ENCODE measurements at regions of chr16 and their contacts with region 1.

Region 1: DNA sequence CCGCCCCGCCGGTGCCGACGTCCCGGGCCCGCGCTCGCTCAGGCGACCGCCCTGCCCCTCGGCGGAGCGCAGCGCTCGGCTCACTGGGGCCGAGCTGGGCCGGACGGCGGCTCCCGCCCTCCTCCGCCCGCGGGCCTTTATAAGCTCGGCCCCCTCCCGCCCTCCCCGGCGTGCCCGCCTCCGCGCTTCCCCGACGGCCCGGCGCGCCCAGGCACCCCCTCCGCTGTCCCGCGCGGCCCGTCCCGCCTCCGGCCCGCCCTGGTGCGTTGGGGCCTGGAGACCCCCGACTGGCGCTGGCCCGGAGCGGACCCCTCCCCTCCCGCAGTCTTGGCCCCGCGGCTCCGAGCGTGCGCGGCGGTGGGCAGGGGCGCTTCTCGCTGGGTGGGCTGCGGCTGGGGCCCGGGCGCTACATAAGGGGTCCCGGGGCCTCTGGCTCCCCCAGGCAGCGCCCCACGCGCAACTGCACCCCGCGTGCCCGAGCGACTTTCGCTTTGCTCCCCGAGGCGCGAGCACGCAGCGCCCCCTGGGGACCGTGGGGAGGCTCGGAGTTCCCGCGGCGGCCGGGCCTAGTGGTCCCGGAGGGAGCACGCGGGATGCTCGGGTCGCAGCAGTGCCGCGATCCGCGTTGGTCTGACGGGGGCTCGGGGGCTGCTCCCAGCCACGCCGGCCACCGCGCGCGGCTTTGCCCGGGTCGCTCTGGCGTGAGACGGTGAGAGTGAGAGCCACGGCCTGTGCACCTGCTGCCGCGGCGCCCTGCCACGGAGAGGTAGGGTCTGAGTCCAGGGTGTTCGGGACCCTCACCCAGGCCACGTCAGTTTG is at the start of gene PIEZO1:
- DNase-seq: peak; percentile 73 to 91 (median 85)
- ATAC-seq: peak; percentile 72 to 73
- H3K4me3 Mint-ChIP-seq: peak within 1 kb of the TSS; percentile 61 to 89 (median 75)
- H3K27ac Mint-ChIP-seq: peak within 1 kb of the TSS in 6 of 10 donors; percentile 29 to 84 (median 72)
- H3K4me1 Mint-ChIP-seq: peaks cover 20 to 52% (median 47%) of the 10 kb centered on the region in 4 donors
- H3K27me3 Mint-ChIP-seq: no peaks in the 10 kb centered on the region
- polyA plus RNA-seq, gene PIEZO1: 2.4 to 8.4 (median 5.7) TPM

Region 2: DNA sequence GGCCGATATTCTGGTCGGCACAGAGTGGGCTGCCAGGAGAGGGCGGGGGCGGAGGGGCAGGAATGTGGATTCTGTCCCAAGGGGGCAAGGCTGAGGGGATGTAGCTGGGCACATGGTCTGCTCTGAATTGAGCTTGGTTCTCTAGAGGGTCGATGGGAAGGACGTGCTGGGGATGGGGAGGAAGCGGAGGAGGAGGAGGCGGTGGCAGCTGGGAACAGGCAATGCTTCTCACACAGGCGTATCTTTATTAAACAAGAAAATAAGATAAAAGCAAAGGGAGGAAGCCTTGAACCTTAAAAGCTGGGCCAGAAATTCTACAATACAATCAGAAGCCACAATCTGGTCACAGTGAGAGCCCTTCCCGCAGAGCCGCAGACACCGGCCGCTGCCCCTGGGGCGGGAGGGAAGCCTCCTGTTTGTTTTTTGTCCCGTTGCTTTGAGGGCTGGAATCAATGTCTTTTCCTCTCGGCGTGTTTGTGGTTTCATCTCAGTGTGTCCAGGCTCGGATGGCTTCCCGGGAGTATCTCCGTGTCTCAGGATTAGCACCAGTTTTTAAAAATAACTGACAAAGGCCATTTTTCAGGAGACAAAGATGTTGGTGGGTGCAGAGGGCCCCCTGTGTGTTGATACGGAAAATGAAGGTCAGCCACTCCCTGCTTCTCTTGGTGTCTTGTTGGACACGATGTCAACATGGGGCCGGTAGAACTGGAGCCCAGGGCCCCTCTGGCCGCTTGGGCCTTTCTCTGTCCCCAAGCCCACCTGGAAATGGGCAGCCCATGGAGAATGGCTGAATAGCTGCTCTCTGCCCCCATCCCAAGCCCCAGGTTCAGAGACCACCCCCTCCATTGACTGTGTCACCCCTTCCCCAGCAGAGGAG is 903.8 kb before region 1 on chr16:
- POLR2A ChIA-PET with region 1: no interaction called
- DNase-seq: no peak
- ATAC-seq: no peak
- H3K4me3 Mint-ChIP-seq: no peak overlapping the region
- H3K27ac Mint-ChIP-seq: peak overlapping the region in 1 of 10 donors; percentile 48
- H3K4me1 Mint-ChIP-seq: peaks cover 0 to 8% (median 0%) of the 10 kb centered on the region in 4 donors
- H3K27me3 Mint-ChIP-seq: no peaks in the 10 kb centered on the region

Region 3: GRCh38 chr16:88700636-88701482 is 84.5 kb before region 1 on chr16:
- POLR2A ChIA-PET with region 1: interaction called, 20 read pairs
- DNase-seq: peak; percentile 82 to 97 (median 94)
- ATAC-seq: peak; percentile 68 to 72
- H3K4me3 Mint-ChIP-seq: peak overlapping the region; percentile 93 to 99 (median 96)
- H3K27ac Mint-ChIP-seq: peak overlapping the region; percentile 88 to 100 (median 96)
- H3K4me1 Mint-ChIP-seq: peaks cover 28 to 72% (median 63%) of the 10 kb centered on the region in 4 donors
- H3K27me3 Mint-ChIP-seq: no peaks in the 10 kb centered on the region

Region 4: DNA sequence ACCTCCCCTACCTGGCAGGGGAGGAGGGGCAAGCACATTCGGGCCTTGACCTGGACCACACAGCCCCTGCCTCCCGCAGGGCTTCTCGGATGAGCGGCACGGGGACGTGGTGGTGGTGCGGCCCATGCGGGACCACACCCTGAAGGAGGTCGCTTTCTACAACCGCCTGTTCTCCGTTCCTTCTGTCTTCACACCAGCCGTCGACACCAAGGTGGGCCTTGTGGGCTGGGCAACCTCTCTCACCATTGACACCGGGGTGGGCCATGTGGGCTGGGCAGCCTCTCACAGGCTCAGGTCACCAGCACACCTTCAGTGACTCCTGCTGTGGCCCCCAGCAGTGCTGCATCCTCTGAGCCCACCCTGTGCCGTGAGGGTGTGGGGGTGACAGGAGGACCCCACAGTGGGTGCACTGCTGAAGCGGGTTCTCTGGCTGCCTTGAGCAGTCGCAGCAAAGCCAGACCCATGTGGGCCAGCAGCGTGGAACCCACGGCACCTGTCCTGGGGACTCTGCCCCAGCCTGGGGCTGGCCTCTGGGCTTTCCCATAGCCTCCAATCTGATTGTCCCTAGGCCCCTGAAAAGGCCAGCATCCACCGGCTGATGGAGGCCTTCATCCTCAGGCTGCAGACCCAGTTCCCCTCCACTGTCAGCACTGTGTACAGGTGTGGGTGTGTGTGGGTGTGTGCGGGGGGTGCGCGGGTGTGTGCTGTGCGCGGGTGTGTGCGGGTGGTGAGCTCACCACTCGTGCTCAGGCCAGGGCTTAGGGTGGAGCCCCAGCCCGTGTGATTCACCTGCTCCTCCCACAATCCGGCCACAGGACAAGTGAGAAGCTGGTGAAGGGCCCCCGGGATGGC is 71.5 kb before region 1 on chr16:
- POLR2A ChIA-PET with region 1: no interaction called
- DNase-seq: no peak
- ATAC-seq: no peak
- H3K4me3 Mint-ChIP-seq: no peak overlapping the region
- H3K27ac Mint-ChIP-seq: peak overlapping the region in 1 of 10 donors; percentile 60
- H3K4me1 Mint-ChIP-seq: peaks cover 2 to 21% (median 7%) of the 10 kb centered on the region in 4 donors
- H3K27me3 Mint-ChIP-seq: no peaks in the 10 kb centered on the region

Region 5: DNA sequence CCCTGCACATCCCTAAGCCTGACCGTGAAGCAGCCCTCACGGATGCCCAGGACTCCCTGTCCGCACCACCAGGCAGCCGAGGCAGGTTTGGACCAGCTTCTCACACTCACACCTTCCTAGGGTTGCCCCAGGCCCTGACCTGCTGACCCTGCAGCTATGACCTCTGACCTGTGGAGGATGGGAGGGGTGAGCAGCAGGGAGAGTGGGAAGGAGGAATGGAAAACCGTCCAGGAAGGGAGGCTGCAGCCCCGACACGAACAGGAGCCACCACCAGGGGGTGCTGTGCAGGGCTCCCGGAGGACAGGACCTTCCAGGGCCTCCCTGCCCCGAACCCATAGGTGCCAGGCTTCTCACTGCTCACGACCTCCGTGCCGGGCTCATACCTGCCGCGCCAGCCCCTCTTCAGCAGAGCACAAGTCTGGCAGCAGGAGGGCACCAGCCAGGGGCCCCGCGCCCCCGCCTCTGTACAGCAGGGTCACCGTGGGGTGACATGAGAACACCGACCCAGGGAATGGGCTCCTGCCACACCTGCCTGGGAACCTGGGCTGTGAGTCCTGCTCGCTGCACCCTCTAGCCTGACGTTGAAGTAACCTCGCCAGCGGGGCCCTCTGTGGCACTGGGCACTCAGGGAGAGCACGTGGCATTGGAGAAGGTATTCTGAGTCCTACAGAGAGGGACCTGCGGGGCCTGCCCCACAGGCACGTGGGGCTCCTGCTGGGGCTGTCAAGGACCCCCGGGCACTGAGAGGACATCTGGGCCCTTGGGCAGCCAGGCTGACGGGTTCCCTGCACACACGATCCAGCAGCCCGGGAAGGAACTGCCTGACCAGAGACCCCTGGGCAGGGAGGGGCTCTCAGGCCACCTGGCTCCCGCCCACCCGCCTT is 41.4 kb before region 1 on chr16:
- POLR2A ChIA-PET with region 1: interaction called, 81 read pairs
- DNase-seq: peak; percentile 52 to 86 (median 72)
- ATAC-seq: peak; percentile 46 to 61
- H3K4me3 Mint-ChIP-seq: peak overlapping the region in 5 of 10 donors; percentile 10 to 62 (median 34)
- H3K27ac Mint-ChIP-seq: peak overlapping the region in 4 of 10 donors; percentile 11 to 59 (median 20)
- H3K4me1 Mint-ChIP-seq: peaks cover 10 to 38% (median 32%) of the 10 kb centered on the region in 4 donors
- H3K27me3 Mint-ChIP-seq: no peaks in the 10 kb centered on the region

Region 6: DNA sequence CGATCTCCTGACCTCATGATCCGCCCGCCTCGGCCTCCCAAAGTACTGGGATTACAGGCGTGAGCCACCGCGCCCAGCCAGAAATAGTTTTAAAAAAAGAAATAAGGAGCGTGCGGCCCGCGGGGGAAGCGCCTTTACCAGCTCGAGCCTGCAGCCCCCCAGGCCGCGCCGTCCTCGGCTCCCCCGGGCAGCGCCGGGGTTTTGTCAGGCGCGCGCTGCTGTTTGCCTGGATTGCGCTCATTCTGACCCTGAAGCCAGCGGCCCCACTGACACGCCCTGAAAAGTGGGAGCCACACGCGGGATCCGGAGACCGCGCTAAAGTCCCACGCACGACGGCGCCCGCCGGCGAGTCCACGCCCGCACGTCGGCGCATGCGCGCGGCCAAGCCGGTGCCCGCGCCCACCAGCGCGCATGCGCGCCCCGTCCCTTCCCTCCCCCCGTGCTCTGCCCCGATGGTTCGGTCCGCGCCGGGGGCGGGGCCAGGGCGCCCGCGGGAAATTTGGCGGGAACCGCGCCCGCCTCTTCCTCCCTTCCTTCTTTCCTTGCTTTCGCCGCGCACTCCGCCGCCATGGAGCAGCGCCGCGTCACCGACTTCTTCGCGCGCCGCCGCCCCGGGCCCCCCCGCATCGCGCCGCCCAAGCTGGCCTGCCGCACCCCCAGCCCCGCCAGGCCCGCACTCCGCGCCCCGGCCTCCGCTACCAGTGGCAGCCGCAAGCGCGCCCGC is 18.1 kb after region 1 on chr16 and contains the start of gene CDT1:
- POLR2A ChIA-PET with region 1: interaction called, 12 read pairs
- DNase-seq: peak; percentile 65 to 88 (median 84)
- ATAC-seq: peak; percentile 54 to 58
- H3K4me3 Mint-ChIP-seq: peak within 1 kb of the TSS; percentile 78 to 91 (median 86)
- H3K27ac Mint-ChIP-seq: peak within 1 kb of the TSS; percentile 63 to 93 (median 86)
- H3K4me1 Mint-ChIP-seq: peaks cover 6 to 31% (median 18%) of the 10 kb centered on the region in 4 donors
- H3K27me3 Mint-ChIP-seq: no peaks in the 10 kb centered on the region
- polyA plus RNA-seq, gene CDT1: 0.13 to 0.46 (median 0.26) TPM

Region 7: GRCh38 chr16:88844419-88845036 is 59.2 kb after region 1 on chr16:
- POLR2A ChIA-PET with region 1: no interaction called
- DNase-seq: no peak
- ATAC-seq: no peak
- H3K4me3 Mint-ChIP-seq: no peak overlapping the region
- H3K27ac Mint-ChIP-seq: no peak overlapping the region
- H3K4me1 Mint-ChIP-seq: peaks cover 0 to 4% (median 0%) of the 10 kb centered on the region in 4 donors
- H3K27me3 Mint-ChIP-seq: no peaks in the 10 kb centered on the region

Region 8: GRCh38 chr16:88856828-88857733 is 71.8 kb after region 1 on chr16 and contains the starts of genes GALNS and TRAPPC2L:
- POLR2A ChIA-PET with region 1: interaction called, 11 read pairs
- DNase-seq: peak; percentile 95 to 100 (median 98)
- ATAC-seq: peak; percentile 84 to 86
- H3K4me3 Mint-ChIP-seq: peak within 1 kb of the TSS; percentile 95 to 100 (median 98)
- H3K27ac Mint-ChIP-seq: peak within 1 kb of the TSS; percentile 93 to 99 (median 96)
- H3K4me1 Mint-ChIP-seq: peaks cover 23 to 48% (median 33%) of the 10 kb centered on the region in 4 donors
- H3K27me3 Mint-ChIP-seq: no peaks in the 10 kb centered on the region
- polyA plus RNA-seq, gene GALNS: 7.8 to 11.9 (median 11.8) TPM
- polyA plus RNA-seq, gene TRAPPC2L: 81.8 to 86.5 (median 82.1) TPM